H1 (cell line): ENCODE measurements at regions of chr1 and their contacts with region 1.

Region 1: DNA sequence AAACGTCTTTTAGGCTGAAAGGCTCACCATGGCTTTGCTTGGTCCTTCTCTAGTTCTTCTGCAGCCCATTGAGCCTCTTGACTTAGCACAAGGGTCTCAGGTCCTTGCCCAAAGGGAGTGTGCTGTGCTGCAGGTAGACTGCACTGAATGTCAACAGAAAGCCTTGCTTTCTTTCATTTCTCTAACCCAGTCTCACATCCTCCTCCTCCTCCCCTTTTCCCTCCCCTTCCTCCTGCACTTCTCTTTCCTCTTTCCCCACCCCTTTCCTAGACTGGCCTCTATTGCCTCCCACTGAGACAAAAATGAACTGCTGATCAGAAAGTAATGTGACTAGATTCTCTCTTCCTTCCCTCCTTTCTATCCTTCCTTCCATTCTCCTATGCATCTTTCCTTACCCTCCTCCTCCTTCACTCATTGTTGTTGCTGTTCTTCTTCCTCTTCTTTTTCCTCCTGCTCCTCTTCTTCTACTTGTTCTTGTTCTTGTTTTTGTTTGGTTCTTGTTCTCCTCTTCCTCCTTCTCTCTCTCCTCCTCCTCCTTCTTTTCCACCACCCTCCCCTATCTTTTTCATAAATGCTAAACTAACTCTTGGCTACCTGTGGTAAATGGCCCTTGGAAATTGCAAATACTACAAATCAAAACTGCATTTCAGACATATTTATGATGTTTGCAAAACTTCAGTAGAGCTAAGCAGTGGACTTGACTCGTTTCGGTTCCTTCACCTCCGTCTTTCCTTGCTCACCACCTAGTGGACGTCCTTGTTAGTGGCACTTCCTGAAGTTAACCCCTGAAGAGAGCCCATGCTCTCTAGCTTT is at the start of gene SELL:
- DNase-seq: peak; percentile 15 to 65
- H3K4me3 ChIP-seq: peak within 1 kb of the TSS in 1 of 4 experiments; percentile 40; a peak in 2 of 8 replicates
- H3K27ac ChIP-seq: no peak within 1 kb of the TSS
- H3K4me1 ChIP-seq: peaks cover 0 to 2% (median 0%) of the 10 kb centered on the region in 4 experiments; a peak in 1 of 7 replicates
- H3K27me3 ChIP-seq: no peaks in the 10 kb centered on the region
- CTCF ChIP-seq: peak; percentile 71 to 86 (median 86)
- EP300 ChIP-seq: no peak
- POLR2A ChIP-seq: no peak
- RAD21 ChIP-seq: peak; percentile 88 to 93
- total RNA-seq, gene SELL: not detected in 2 replicates

Region 2: DNA sequence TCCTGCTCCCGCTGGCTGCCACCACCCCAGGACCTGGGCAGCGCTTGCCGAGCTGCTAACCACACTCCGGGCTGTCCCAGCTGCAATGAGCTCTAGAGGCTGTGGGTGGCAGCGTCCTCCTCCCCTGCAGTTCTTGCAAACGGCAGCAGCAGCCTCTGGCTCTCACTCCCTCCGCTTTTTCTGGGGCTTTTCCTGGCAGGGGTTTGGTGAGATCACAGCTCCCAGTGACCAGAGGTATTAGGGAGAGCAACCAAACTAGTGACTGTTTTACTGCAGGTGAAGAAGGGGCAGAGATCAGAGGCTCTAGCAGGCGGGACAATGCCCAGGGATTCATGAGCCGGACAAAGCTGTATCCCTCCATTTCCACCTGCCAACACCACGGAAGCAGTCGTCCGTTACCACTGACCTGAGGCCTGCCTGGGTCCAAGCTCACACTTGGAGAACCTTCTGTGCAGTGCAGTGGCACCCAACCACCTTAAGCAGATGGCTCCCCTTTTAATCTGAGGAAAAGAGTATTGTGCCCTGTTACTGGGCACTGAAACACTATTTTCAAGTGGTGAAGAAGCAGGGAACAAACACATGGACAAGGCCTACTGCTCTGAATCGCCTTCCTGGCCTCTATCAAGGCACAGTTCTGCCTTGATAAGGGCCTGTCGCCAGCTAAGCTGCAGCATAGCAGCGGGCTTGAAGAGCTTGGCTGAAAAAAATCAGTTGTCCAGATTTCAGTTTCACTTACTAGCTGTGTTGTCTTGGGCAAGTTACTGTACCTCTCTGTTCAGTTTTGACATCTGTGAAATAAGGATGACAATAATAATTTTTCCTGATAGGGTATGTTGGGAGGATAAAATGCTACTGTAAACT is 125.0 kb before region 1 on chr1 and contains the start of gene F5:
- CTCF ChIA-PET with region 1: interaction called, 13 read pairs
- POLR2A ChIA-PET with region 1: no interaction called
- DNase-seq: peak; percentile 76 to 77
- H3K4me3 ChIP-seq: peak within 1 kb of the TSS in 1 of 4 experiments; percentile 42; a peak in 3 of 8 replicates
- H3K27ac ChIP-seq: no peak within 1 kb of the TSS
- H3K4me1 ChIP-seq: peaks cover 0 to 2% (median under 1%) of the 10 kb centered on the region in 4 experiments; a peak in 3 of 7 replicates
- H3K27me3 ChIP-seq: no peaks in the 10 kb centered on the region; a peak in 1 of 7 replicates
- CTCF ChIP-seq: peak; percentile 72 to 79 (median 72)
- EP300 ChIP-seq: peak in 1 of 2 experiments; percentile 58; a peak in 1 of 3 replicates
- POLR2A ChIP-seq: no peak
- RAD21 ChIP-seq: peak; percentile 82 to 84
- total RNA-seq, gene F5: 0.04 TPM in 1 of 2 replicates, not detected in the other

Region 3: DNA sequence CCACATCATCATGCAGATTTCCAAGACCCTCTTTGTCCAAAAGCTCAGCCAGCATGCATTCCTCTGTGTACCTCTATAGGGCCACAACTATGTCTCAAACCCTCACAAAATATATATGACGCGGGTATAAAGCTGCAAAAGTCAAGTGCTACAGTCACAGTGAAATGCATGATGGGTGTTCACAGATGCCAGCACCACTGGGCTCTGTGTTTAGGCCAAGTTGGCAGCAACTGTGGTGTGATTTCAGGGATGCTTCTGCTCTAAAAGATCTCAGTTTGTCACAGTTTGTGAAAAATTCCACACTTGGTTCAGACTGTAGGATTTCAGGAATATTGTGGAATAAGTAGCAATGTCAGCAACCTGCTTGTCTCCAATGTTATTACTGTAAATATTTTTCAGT is 57.8 kb before region 1 on chr1:
- CTCF ChIA-PET with region 1: no interaction called
- POLR2A ChIA-PET with region 1: no interaction called
- DNase-seq: no peak
- H3K4me3 ChIP-seq: no peak overlapping the region
- H3K27ac ChIP-seq: no peak overlapping the region
- H3K4me1 ChIP-seq: no peaks in the 10 kb centered on the region; a peak in 1 of 7 replicates
- H3K27me3 ChIP-seq: no peaks in the 10 kb centered on the region
- CTCF ChIP-seq: no peak
- EP300 ChIP-seq: no peak
- POLR2A ChIP-seq: no peak
- RAD21 ChIP-seq: no peak

Region 4: GRCh38 chr1:169701261-169702005 is 10.2 kb before region 1 on chr1:
- CTCF ChIA-PET with region 1: interaction called, 12 read pairs
- POLR2A ChIA-PET with region 1: no interaction called
- DNase-seq: no peak
- H3K4me3 ChIP-seq: no peak overlapping the region
- H3K27ac ChIP-seq: no peak overlapping the region
- H3K4me1 ChIP-seq: no peaks in the 10 kb centered on the region
- H3K27me3 ChIP-seq: no peaks in the 10 kb centered on the region; a peak in 1 of 7 replicates
- CTCF ChIP-seq: no peak
- EP300 ChIP-seq: no peak
- POLR2A ChIP-seq: no peak
- RAD21 ChIP-seq: no peak

Region 5: DNA sequence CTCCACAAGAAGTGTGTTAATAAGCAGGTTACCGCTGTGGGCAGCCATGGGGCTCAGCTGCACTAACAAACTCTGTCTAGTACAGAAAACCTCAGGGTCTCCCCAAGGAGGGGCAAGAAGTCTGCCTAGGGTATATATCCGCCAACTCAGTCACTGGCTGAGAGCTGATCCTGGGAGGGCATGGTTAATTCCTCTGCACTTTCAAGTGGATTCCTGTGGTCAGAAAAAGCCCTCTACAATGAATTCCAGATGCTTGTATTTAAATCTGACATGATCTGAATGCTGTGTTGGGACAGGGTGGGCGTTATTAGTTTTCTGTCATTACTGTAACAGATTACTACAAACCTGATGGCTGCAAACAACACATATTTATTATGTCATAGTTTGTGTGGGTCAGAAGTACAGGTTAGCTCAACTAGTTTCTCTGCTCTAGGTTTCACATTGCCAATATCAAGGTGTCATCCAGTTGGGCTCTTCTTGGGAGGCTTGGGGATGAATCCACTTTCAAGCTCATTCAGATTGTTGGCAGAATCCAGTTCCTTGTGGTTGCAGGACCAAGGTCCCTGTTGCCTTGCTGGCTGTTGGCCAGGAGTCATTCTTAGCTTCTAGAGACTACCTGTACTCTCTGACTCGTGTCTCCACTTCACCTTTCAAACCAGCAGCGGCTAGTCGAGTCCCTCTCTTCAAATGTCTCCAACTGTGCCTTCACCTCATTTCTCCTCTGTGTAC is 30.2 kb after region 1 on chr1:
- CTCF ChIA-PET with region 1: no interaction called
- POLR2A ChIA-PET with region 1: no interaction called
- DNase-seq: no peak
- H3K4me3 ChIP-seq: no peak overlapping the region
- H3K27ac ChIP-seq: no peak overlapping the region
- H3K4me1 ChIP-seq: peaks cover 0 to 7% (median 2%) of the 10 kb centered on the region in 4 experiments; a peak in 4 of 7 replicates
- H3K27me3 ChIP-seq: no peaks in the 10 kb centered on the region
- CTCF ChIP-seq: no peak
- EP300 ChIP-seq: no peak
- POLR2A ChIP-seq: no peak
- RAD21 ChIP-seq: no peak